HEK293 (cell line): ENCODE measurements at regions of chr14 and their contacts with region 1.

Region 1: GRCh38 chr14:93655078-93655750 is 133.1 kb downstream of the PRIMA1 start:
- H3K4me3 ChIP-seq: no peak overlapping the region
- H3K27ac ChIP-seq: no peak overlapping the region
- H3K4me1 ChIP-seq: no peaks in the 10 kb centered on the region
- CTCF ChIP-seq: no peak

Region 2: GRCh38 chr14:93645200-93645599 is 10.0 kb before region 1 on chr14:
- CTCF ChIA-PET with region 1: interaction called, 12 read pairs
- POLR2A ChIA-PET with region 1: no interaction called
- H3K4me3 ChIP-seq: no peak overlapping the region
- H3K27ac ChIP-seq: no peak overlapping the region
- H3K4me1 ChIP-seq: no peaks in the 10 kb centered on the region
- CTCF ChIP-seq: no peak

Region 3: DNA sequence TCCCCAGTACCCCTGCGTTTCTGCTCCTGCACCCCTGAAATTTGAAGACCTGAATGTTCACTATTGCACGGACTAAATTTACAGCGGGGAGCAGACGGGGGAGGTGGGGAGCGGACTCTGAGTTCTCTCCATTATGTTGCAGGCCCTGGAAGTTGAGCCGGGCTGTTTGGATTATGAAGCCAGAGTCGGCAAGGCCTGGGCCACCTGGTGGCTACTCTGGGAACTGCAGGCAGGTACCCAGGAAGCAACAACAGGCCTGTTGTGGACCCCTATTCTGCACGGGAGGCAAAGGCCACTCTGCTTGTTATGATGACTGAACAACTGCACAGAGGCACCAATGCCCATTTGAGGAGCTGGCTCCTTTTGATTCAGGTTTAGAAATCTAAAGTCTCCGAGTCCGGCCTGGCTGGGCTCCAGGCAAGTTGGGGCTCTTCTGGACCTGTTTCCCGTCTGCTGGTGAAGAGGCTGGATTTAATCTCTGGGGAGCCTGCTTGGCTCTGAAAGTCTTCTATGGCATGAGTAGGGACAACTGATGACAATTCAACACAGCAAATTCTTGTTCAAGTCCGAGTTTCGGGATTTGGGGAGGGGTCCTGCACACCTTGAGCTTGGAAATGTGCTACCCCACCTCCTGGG is 237.8 kb after region 1 on chr14:
- CTCF ChIA-PET with region 1: interaction called, 26 read pairs
- POLR2A ChIA-PET with region 1: interaction called, 4 read pairs
- H3K4me3 ChIP-seq: no peak overlapping the region
- H3K27ac ChIP-seq: no peak overlapping the region
- H3K4me1 ChIP-seq: no peaks in the 10 kb centered on the region
- CTCF ChIP-seq: peak; percentile 63

Region 4: DNA sequence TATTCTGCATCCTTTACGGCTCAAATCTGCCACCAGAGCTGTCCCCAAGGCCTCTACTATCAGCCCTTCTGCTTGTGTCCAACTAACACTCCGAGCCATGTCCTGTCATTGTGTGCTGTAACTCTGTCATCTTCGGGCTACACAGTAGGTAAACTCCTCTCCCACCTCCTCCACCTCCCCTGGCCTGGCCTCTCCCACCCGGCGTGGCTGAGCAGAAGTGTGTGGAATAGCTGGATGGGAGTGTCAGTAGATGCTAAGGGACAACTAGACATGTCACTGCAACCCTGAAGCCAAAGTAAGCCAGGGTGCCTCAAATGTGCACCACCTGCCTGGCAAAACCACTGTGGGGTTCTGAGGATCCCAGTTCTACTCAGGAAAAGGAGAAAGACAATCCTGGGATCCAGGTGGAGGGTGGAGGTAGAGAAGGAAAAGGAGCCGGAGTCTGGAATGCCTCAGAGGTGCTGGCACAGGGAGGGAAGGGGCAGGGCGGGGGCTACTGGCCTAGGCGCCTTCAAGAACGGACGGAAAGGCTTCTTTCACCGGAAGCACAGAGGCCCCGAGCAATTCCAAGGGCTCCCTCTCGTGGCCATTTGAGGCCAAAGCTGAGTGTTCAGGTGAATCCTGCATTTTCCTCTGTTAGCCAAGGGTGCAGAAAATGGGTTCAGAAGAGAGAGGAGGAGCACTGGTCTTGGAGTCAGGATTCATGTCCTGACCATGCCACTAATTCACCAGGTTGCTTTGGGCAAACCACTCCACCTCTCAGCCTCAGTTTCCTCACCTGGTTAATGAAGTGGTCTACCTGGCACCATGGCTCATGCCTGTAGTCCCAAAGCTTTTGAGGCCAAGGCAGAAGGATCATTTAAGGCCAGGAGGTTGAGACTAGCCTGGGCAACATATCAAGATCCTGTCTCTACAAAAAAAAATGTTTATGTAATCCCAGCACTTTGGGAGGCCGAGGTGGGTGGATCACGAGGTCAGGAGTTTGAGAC is 251.4 kb after region 1 on chr14:
- CTCF ChIA-PET with region 1: interaction called, 54 read pairs
- POLR2A ChIA-PET with region 1: no interaction called
- H3K4me3 ChIP-seq: no peak overlapping the region
- H3K27ac ChIP-seq: no peak overlapping the region
- H3K4me1 ChIP-seq: no peaks in the 10 kb centered on the region
- CTCF ChIP-seq: 0 out of 2 replicates have a peak, but pooled peaks have one; percentile 15